Panc1 (cell line): ENCODE measurements at regions of chr4 and their contacts with region 1.

Region 1: DNA sequence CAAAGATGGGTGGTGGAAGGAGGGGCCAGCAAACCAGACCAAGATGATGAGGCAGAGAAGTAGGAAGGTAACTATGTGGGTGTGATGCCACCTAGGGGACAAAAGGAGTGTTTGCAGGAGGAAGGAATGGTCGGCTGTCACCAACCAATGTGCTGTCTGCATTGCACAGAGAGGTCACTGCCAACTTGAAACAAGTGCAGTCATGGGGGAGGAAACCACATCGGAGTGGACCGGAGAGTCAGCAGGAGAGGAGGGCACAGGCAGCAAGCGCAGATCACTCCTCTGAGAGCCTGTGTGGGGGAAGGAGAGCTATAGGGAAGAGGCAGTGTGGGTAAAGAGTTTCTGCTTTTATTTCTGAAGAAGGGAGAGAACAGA is 38.5 kb upstream of the FGFBP2 start:
- DNase-seq: peak; percentile 42
- ATAC-seq: peak; percentile 94
- H3K4me3 ChIP-seq: no peak overlapping the region
- H3K27ac ChIP-seq: no peak overlapping the region
- H3K4me1 ChIP-seq: no peaks in the 10 kb centered on the region
- H3K27me3 ChIP-seq: no peaks in the 10 kb centered on the region
- CTCF ChIP-seq: peak; percentile 79

Region 2: DNA sequence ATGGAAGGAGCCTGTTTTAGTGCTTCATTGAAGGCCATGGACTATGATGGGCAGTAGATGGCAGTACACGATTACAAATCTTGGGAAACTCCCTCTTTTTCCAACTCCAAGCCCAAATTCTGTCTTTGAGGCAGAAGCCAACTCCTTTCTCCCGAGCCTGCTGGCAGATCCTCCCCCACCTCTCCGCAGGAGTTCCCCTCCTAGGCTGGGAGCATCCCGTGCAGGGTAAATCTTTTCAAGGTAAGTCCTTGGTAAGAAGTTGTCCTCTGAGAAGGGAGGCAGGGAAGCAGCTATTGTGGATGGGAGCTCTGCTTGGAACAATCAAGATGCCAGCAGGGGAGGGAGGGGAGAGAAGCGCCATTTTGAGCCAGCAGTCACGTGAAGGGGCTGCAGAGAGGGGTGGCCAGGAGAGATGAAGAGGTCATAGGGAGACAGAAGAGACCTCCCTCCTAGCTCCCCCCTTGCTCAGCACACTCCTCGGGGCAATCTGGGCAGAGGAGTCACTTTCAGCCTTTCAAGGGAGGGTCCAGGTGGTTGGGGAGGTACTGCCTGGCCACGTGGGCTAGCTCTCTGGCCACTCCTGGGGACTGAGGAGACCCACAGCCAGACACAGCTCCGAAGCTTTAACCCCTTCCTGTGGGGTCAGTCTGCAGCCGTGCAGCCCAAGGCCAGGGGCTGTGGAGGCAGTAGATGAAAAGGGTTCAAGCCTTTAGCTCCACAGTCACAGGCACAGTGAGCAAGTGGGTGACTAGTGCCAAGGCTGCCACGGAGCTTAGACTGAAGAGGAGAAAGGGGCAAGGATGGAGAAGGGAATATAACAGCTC is 522.2 kb before region 1 on chr4:
- CTCF ChIA-PET with region 1: no interaction called
- POLR2A ChIA-PET with region 1: no interaction called
- in situ Hi-C with region 1: no loop called
- intact Hi-C with region 1: loop called (anchors 5 kb)
- DNase-seq: peak; percentile 68
- ATAC-seq: peak; percentile 95
- H3K4me3 ChIP-seq: peak overlapping the region; percentile 45 to 67
- H3K27ac ChIP-seq: peak overlapping the region; percentile 69
- H3K4me1 ChIP-seq: no peaks in the 10 kb centered on the region
- H3K27me3 ChIP-seq: no peaks in the 10 kb centered on the region
- CTCF ChIP-seq: peak; percentile 66

Region 3: DNA sequence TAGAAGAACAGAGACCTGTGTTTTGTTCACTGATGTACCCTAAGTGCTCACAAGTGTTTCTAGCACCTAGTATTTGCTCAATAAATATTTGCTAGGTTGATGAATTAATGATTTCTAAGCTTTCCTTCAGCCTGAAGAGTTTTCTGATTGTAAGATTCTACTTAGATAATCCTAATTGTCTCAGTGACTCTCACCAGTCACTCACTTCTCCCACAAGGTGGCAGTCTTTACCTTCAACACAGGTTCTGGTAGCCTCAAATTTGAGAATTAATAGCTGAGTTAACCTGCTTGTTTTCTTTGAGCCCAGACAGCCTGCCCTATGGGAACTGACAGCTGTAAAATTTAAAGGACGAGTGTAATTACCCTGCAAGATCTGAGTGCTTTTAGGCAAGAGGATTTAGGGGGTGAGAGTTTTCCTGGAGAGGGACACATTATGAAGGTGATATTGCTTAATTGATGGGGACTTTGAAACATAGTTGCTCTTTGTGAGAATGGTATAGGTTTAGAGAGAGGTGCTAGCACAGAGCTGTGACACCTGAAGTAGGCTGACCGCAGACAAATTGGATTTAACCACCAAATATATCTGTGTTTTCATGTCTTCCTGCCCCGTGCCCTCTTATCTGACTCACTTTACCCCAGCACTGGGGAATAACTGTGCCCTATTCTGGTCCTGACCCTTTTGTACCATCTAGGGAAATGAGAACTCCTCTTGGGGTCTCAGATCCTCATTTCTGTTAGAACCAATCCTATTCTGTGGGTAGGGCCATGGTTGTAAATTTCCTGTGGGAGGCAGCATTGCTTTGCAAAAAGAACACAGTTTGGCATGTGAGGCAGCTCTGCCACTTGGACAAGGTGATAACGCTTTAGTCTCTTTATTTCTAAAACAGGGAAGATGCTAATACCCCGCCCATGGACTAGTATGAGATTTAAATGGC is 195.6 kb before region 1 on chr4:
- CTCF ChIA-PET with region 1: interaction called, 13 read pairs
- POLR2A ChIA-PET with region 1: no interaction called
- in situ Hi-C with region 1: no loop called
- intact Hi-C with region 1: loop called (anchors 1 kb)
- DNase-seq: peak; percentile 22
- ATAC-seq: peak; percentile 82
- H3K4me3 ChIP-seq: no peak overlapping the region
- H3K27ac ChIP-seq: no peak overlapping the region
- H3K4me1 ChIP-seq: no peaks in the 10 kb centered on the region
- H3K27me3 ChIP-seq: no peaks in the 10 kb centered on the region
- CTCF ChIP-seq: peak; percentile 72

Region 4: DNA sequence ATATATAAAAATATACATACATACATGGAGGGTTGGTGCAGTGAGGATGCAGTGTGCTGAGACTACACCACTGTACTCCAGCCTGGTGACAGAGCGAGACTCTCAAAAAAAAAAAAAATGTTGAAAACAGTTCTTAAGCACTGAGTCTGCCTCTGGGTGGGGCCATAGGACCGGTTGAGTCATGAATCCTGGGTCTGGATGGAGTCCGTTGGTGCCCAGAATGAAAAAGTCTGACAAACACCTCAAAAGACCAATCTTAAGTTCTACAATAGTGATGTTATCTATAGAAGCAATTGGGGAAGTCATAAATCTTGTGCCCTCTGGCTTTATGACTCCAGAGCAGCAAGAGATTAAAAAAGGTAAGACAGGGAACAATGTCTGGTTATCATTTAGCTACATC is 133.4 kb before region 1 on chr4:
- CTCF ChIA-PET with region 1: interaction called, 11 read pairs
- POLR2A ChIA-PET with region 1: no interaction called
- in situ Hi-C with region 1: no loop called
- intact Hi-C with region 1: no loop called
- DNase-seq: no peak
- ATAC-seq: no peak
- H3K4me3 ChIP-seq: no peak overlapping the region
- H3K27ac ChIP-seq: no peak overlapping the region
- H3K4me1 ChIP-seq: no peaks in the 10 kb centered on the region
- H3K27me3 ChIP-seq: no peaks in the 10 kb centered on the region; the same call in 1 of the 2 replicates
- CTCF ChIP-seq: no peak

Region 5: GRCh38 chr4:15882675-15883086 is 118.8 kb before region 1 on chr4:
- CTCF ChIA-PET with region 1: interaction called, 8 read pairs
- POLR2A ChIA-PET with region 1: no interaction called
- in situ Hi-C with region 1: no loop called
- intact Hi-C with region 1: loop called (anchors 1 kb)
- DNase-seq: peak; percentile 65
- ATAC-seq: peak; percentile 88
- H3K4me3 ChIP-seq: no peak overlapping the region
- H3K27ac ChIP-seq: no peak overlapping the region
- H3K4me1 ChIP-seq: no peaks in the 10 kb centered on the region
- H3K27me3 ChIP-seq: no peaks in the 10 kb centered on the region
- CTCF ChIP-seq: peak; percentile 83

Region 6: DNA sequence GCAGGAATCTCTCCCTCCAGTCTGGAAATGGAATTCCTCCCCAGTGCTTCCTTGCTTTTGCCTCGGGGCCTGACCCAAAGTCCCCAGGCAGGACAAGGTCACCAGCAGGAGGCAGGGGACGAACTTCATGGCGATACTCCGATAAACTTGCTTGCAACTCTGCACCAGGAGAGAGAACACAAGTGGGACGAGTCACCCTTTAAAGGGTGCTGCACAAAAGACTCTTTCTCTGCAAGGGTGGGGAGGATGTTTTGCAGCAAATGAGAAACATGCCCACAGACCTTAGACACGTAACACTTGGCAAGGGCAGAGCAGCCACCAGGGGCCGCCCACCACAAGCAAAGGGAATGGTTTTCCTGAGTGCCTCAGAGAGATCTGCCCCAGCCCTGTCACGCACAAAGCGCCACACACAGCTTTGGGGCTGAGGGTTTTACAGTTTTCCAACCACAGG is 38.4 kb before region 1 on chr4 and contains the start of gene FGFBP2:
- CTCF ChIA-PET with region 1: no interaction called
- POLR2A ChIA-PET with region 1: no interaction called
- in situ Hi-C with region 1: no loop called
- intact Hi-C with region 1: loop called (anchors 2 kb)
- DNase-seq: no peak
- ATAC-seq: peak; percentile 80
- H3K4me3 ChIP-seq: no peak within 1 kb of the TSS
- H3K27ac ChIP-seq: no peak within 1 kb of the TSS
- H3K4me1 ChIP-seq: no peaks in the 10 kb centered on the region; the same call in 1 of the 2 replicates
- H3K27me3 ChIP-seq: no peaks in the 10 kb centered on the region
- CTCF ChIP-seq: peak; percentile 61
- total RNA-seq, gene FGFBP2: 0.33 TPM

Region 7: GRCh38 chr4:16056681-16057385 is 55.4 kb after region 1 on chr4:
- CTCF ChIA-PET with region 1: no interaction called
- POLR2A ChIA-PET with region 1: no interaction called
- in situ Hi-C with region 1: no loop called
- intact Hi-C with region 1: no loop called
- DNase-seq: no peak
- ATAC-seq: no peak
- H3K4me3 ChIP-seq: no peak overlapping the region
- H3K27ac ChIP-seq: no peak overlapping the region
- H3K4me1 ChIP-seq: no peaks in the 10 kb centered on the region
- H3K27me3 ChIP-seq: no peaks in the 10 kb centered on the region; the same call in 1 of the 2 replicates
- CTCF ChIP-seq: no peak